Sigmoid colon (tissue), 7 donors: ENCODE measurements at regions of chr10 and their contacts with region 1.

Region 1: DNA sequence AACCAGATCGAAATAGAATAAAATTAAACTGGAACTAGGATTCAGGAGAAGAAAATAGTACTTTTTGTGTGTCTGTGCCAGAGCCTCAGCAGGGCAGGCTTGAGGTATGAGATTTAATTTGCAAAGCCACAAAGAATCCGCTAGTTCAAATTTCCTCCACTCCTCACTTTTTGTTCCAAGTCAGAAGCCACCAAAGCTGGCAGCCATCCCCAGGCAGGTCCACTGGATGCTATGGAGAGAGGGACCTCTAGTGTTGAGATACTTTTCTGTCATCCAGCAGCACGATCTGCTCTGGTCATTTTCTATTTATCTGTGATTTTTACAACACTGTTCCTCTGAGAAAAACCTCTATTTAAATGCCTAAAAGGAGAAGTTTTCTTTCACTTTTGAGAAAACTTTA is 147.9 kb upstream of the FRMD4A start:
- DNase-seq: peak; percentile 77
- H3K4me3 ChIP-seq: no peak overlapping the region
- H3K27ac ChIP-seq: peak overlapping the region in 1 of 4 donors; percentile 6
- H3K4me1 ChIP-seq: peaks cover 0 to 21% (median 5%) of the 10 kb centered on the region in 4 donors
- H3K27me3 ChIP-seq: no peaks in the 10 kb centered on the region
- CTCF ChIP-seq: peak in 3 of 4 experiments; percentile 20 to 43 (median 37)
- EP300 ChIP-seq: no peak
- POLR2A ChIP-seq: no peak

Region 2: DNA sequence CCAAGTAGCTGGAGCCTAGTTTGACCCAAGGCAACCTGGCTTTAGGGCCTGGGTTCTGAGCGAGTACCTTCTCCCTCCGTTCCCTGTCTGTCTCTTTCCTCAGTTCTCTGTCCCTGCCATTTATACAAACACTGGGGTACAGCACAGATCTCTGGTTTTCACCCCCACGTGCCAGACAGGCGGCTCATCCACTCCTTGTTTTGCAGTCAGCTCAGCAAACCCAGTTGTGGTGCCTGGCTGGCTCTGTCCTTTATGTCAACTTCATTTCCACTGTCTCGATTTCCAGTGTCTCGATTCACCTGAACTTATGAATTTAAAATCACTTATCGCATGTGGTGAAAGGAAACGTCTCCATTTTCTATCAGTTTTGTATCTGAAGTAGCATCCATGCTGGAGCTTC is 378.7 kb before region 1 on chr10:
- intact Hi-C with region 1: loop called (anchors 5 kb)
- DNase-seq: no peak
- H3K4me3 ChIP-seq: no peak overlapping the region
- H3K27ac ChIP-seq: no peak overlapping the region
- H3K4me1 ChIP-seq: no peaks in the 10 kb centered on the region
- H3K27me3 ChIP-seq: no peaks in the 10 kb centered on the region
- CTCF ChIP-seq: no peak
- EP300 ChIP-seq: no peak
- POLR2A ChIP-seq: no peak

Region 3: DNA sequence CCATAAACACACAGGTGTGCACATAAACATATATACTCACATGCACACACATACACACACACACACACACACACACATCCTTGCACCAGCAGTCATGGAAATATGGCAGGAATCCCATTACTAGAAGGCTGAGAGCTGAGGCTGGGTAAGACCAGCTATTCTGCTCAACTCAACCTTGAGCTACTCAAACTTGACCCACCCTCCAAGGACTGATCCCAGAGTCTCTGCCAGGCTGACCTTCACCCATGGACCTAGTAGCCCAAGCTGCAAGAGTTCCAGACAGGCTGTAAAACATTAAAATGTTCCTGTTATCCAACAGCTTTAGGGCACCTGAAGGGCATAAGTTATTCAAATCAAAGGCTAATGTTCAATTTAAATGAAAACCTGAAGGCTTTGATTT is 282.5 kb before region 1 on chr10:
- intact Hi-C with region 1: loop called (anchors 2 kb)
- DNase-seq: no peak
- H3K4me3 ChIP-seq: no peak overlapping the region
- H3K27ac ChIP-seq: no peak overlapping the region
- H3K4me1 ChIP-seq: no peaks in the 10 kb centered on the region
- H3K27me3 ChIP-seq: peaks cover 0 to 6% (median 4%) of the 10 kb centered on the region in 3 donors
- CTCF ChIP-seq: no peak
- EP300 ChIP-seq: no peak
- POLR2A ChIP-seq: no peak